GM12878 (cell line): ENCODE measurements at regions of chr14 and their contacts with region 1.

Region 1: DNA sequence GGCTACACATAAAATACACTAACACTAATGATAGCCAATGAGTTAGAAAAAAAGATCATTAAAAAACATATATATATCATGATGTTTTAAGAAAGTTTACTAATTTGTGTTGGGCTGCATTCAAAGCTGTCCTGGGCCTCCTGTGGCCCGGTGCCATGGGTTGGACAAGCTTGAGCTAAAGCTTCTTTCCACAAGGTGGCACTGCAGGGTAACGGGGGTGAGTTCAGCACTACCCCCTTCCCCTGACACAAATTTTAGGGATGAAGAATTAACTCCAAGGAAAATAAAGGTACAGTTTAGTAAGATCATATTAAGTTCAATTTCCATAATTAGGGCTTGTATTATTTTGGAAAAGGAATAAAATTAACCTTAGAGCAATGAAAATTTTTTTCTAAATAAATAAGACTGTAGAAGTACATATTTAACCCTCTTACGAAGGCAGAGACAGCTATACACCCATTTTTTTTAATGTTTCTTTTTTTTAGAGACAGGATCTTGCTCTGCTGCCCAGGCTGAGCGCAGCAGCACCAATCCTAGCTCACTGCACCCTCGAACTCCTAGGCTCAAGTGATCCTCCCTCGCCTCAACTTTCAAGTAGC is 38.9 kb downstream of the PPP1R13B start:
- DNase-seq: no peak
- ATAC-seq: peak; percentile 89
- H3K4me3 ChIP-seq: no peak overlapping the region
- H3K27ac ChIP-seq: no peak overlapping the region
- H3K4me1 ChIP-seq: peaks cover 30% of the 10 kb centered on the region
- H3K27me3 ChIP-seq: no peaks in the 10 kb centered on the region
- CTCF ChIP-seq: peak; percentile 79 to 88 (median 85)
- EP300 ChIP-seq: no peak
- POLR2A ChIP-seq: no peak
- RAD21 ChIP-seq: peak; percentile 91

Region 2: DNA sequence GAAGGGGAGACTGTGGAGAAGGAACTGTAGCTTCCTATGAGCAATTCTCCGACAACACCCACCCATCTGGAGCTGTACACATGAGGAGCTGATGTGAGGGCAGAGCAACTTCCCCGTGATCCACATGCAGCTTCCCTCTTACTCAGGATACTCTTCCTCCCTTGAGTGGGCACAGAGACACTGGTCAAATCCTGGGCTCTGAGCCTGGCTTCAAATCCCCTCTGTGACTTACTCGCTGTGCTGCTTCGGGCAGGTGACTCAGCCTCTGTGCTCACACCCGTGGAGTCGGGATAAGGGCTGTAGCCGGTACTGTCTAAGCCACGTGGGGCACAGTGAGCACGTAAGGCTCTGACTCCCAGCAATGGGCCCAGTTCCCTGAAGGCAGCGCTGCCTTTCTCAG is 61.8 kb before region 1 on chr14:
- CTCF ChIA-PET with region 1: no interaction called
- POLR2A ChIA-PET with region 1: no interaction called
- RAD21 ChIA-PET with region 1: no interaction called
- SMC1A ChIA-PET with region 1: no interaction called
- in situ Hi-C with region 1: no loop called
- intact Hi-C with region 1: no loop called
- DNase-seq: no peak
- ATAC-seq: no peak
- H3K4me3 ChIP-seq: no peak overlapping the region
- H3K27ac ChIP-seq: no peak overlapping the region
- H3K4me1 ChIP-seq: no peaks in the 10 kb centered on the region
- H3K27me3 ChIP-seq: no peaks in the 10 kb centered on the region
- CTCF ChIP-seq: no peak
- EP300 ChIP-seq: no peak
- POLR2A ChIP-seq: no peak
- RAD21 ChIP-seq: no peak

Region 3: DNA sequence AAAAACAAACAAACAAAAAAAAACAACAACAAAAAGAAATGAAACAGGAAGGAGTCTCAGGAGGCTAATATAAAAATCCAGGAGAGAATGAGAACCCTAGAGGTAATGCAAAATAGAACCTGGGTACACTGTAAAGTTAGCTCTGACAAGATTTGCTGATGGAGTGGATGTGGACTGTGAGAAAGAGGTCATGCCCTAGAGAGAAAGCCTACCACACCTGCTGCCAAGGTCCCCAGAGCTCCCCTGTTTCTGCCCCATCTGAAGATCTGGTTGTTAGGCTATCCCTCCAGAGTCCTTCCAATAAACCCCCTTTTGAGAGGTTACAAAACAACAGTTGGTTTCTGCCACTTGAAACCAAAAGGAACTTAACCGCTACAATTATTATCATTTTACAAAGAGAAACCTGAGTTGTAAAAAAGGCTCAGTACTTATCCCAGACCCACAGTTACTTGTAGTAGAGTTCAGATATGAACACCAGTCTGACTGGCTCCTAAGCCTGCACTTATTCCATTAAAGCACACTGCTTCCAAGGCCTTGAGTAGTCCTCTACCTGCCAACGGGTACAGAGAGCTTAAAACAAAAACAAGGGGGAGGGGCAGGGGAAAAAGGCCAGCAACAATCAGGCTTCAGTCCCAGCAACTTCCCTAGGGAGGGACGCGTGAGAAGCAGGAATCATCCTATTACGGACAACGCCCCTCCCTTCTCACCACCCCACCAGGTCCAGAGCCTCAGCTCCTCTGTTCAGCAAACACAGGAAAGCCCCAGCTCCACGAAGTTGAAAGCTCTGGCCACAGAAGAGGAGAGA is 11.2 kb after region 1 on chr14:
- CTCF ChIA-PET with region 1: interaction called, 27 read pairs
- POLR2A ChIA-PET with region 1: no interaction called
- RAD21 ChIA-PET with region 1: interaction called, 11 read pairs
- SMC1A ChIA-PET with region 1: interaction called, 15 read pairs
- in situ Hi-C with region 1: no loop called
- intact Hi-C with region 1: no loop called
- DNase-seq: no peak
- ATAC-seq: peak; percentile 77
- H3K4me3 ChIP-seq: peak overlapping the region; percentile 43
- H3K27ac ChIP-seq: peak overlapping the region; percentile 47
- H3K4me1 ChIP-seq: peaks cover 4% of the 10 kb centered on the region
- H3K27me3 ChIP-seq: no peaks in the 10 kb centered on the region
- CTCF ChIP-seq: no peak
- EP300 ChIP-seq: no peak
- POLR2A ChIP-seq: no peak
- RAD21 ChIP-seq: no peak

Region 4: DNA sequence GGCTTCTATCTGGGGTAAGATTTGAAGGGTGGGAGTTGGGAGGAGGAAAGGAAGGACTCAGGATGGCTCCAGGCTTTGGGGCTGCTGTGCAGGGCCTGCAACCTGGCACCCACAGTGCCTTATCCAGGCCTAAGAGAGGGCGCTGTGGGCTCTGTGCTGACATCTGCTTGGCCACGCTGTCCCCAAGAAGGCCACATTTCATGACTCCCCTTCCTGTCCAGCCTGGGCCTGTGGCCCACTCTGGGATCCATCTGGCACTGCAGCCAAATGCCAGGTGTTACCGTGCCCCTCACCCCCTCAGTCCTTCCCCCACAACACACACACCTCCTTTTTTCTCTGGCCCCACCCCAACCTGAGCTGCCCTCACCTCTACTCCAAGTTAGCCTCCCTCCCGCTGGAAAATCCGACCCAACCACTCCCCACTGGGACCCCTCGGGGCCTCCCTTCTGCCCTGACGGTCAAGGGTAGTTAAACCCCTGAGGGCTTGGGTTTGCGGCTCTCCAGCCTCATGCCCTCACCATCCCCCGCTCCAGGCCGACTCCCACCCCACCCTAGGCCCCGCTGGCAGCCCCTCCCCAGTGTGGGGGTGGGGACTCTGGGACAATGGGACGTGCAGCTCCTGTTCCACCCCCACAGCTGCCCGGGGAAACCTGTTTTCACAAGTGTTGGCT is 46.7 kb after region 1 on chr14:
- CTCF ChIA-PET with region 1: interaction called, 11 read pairs
- POLR2A ChIA-PET with region 1: no interaction called
- RAD21 ChIA-PET with region 1: interaction called, 5 read pairs
- SMC1A ChIA-PET with region 1: interaction called, 5 read pairs
- in situ Hi-C with region 1: no loop called
- intact Hi-C with region 1: no loop called
- DNase-seq: no peak
- ATAC-seq: no peak
- H3K4me3 ChIP-seq: no peak overlapping the region
- H3K27ac ChIP-seq: no peak overlapping the region
- H3K4me1 ChIP-seq: no peaks in the 10 kb centered on the region
- H3K27me3 ChIP-seq: peaks cover 0 to 1% of the 10 kb centered on the region in 2 experiments; a peak in 1 of 4 replicates
- CTCF ChIP-seq: no peak
- EP300 ChIP-seq: no peak
- POLR2A ChIP-seq: no peak
- RAD21 ChIP-seq: no peak

Region 5: DNA sequence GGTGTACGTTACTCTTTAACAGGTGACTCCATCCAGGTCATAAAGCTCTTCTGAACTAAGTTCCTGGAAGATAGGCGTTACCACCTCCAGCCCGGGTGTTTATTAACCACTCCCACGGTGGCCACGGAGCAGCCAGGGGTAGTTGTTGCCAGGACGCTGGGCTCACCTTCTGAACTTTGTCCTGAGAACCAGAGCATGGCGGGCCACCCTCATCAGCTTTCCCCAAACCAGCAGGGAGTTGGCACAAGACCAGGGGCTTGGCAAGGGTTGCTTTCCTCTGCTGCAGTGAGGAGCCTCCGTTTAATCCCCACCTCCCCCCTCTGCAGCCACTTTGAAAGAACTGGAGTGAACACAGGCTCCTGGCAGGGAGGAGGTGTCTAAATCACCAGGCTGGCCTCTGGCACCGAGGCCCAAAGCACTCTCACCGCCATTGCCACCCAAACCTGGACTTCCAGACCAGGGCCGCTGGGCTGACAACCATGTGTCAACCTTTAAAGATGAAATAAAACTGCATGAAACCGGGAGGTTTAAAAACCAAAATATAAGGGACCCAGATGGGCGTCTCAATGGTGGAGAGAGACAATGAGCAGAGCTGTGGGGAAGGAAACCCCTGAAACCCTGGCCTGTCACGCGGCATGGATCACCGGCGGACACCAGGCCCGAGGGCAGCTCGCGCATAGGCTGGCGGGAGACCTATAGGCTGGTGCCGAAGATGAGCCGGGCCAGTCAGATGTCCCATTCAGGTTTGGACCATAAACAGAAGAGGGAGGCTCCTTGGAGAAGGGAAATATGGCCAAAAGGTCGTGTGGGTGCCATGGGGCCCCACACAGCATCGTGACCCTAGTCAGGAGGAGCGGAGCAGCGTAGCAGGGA is 88.8 kb after region 1 on chr14:
- CTCF ChIA-PET with region 1: interaction called, 52 read pairs
- POLR2A ChIA-PET with region 1: no interaction called
- RAD21 ChIA-PET with region 1: interaction called, 6 read pairs
- SMC1A ChIA-PET with region 1: interaction called, 3 read pairs
- in situ Hi-C with region 1: no loop called
- intact Hi-C with region 1: no loop called
- DNase-seq: no peak
- ATAC-seq: no peak
- H3K4me3 ChIP-seq: no peak overlapping the region
- H3K27ac ChIP-seq: no peak overlapping the region
- H3K4me1 ChIP-seq: no peaks in the 10 kb centered on the region
- H3K27me3 ChIP-seq: no peaks in the 10 kb centered on the region
- CTCF ChIP-seq: no peak
- EP300 ChIP-seq: no peak
- POLR2A ChIP-seq: no peak
- RAD21 ChIP-seq: no peak

Region 6: DNA sequence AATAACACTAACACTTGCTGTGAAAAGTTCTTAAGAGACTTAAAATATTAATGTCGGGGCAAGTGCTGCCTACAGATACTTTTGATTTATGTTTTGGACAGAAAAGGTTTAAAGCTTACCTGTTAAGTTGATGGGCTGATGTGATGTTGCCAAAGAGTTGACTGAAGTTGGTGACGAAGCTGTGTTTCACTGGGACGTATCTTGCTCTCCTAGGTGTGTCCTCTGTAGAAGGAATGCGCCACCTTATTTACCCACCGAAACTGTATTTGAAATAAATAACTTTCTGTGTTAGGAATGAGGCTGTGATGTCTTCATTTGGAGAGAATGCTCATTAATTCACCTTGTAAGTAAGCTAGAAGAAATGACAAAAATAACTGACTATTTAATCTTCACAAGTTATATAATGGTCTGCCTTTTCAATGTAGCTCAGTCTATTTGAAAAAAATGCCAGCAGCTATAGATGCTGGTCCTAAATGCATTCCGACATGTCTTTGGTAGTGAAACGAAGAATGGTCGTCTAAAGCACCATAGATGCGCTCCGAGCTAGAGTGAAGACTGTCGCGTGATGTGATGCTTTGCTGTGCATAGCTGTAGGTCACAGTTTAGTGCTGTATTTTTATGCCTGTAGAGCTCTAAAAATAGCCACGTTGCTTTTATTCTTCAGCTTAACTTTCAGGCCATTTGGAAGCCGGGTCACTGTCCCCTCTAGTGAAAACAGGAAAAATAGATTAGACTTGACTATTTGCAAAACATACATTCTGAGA is 133.7 kb after region 1 on chr14 and contains the start of gene RD3L:
- CTCF ChIA-PET with region 1: no interaction called
- POLR2A ChIA-PET with region 1: no interaction called
- RAD21 ChIA-PET with region 1: no interaction called
- SMC1A ChIA-PET with region 1: no interaction called
- in situ Hi-C with region 1: no loop called
- intact Hi-C with region 1: no loop called
- DNase-seq: no peak
- ATAC-seq: no peak
- H3K4me3 ChIP-seq: no peak within 1 kb of the TSS
- H3K27ac ChIP-seq: no peak within 1 kb of the TSS
- H3K4me1 ChIP-seq: no peaks in the 10 kb centered on the region
- H3K27me3 ChIP-seq: peaks cover 0 to 6% of the 10 kb centered on the region in 2 experiments; a peak in 3 of 4 replicates
- CTCF ChIP-seq: no peak
- EP300 ChIP-seq: no peak
- POLR2A ChIP-seq: no peak
- RAD21 ChIP-seq: no peak
- polyA plus RNA-seq, gene RD3L: not detected

Region 7: DNA sequence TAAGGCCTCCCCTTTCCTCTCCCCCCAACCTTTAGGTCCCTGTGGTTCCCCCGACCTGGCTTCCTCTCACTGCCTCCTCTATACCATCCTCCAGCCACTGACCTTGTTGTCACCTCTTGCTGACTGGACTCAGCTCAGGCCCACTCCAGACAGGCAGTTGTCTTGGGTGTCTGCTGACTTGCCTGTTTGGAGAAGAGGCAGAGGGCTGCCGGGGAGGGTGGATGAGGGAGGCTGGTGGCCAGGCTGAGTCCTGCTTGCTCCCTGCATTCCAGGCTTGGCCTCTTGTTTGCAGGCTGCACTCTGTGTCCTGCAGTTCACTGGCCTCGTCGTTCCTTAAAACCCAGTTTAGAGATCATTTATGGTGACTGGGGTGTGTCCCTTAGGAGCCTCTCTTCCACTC is 164.9 kb after region 1 on chr14:
- CTCF ChIA-PET with region 1: interaction called, 96 read pairs
- POLR2A ChIA-PET with region 1: no interaction called
- RAD21 ChIA-PET with region 1: interaction called, 3 read pairs
- SMC1A ChIA-PET with region 1: interaction called, 14 read pairs
- in situ Hi-C with region 1: no loop called
- intact Hi-C with region 1: no loop called
- DNase-seq: no peak
- ATAC-seq: no peak
- H3K4me3 ChIP-seq: no peak overlapping the region
- H3K27ac ChIP-seq: no peak overlapping the region
- H3K4me1 ChIP-seq: no peaks in the 10 kb centered on the region
- H3K27me3 ChIP-seq: no peaks in the 10 kb centered on the region
- CTCF ChIP-seq: no peak
- EP300 ChIP-seq: no peak
- POLR2A ChIP-seq: no peak
- RAD21 ChIP-seq: no peak

Region 8: GRCh38 chr14:104078031-104078455 is 269.5 kb after region 1 on chr14:
- CTCF ChIA-PET with region 1: interaction called, 33 read pairs
- POLR2A ChIA-PET with region 1: no interaction called
- RAD21 ChIA-PET with region 1: interaction called, 6 read pairs
- SMC1A ChIA-PET with region 1: interaction called, 9 read pairs
- in situ Hi-C with region 1: no loop called
- intact Hi-C with region 1: loop called (anchors 2 kb)
- DNase-seq: peak; percentile 43
- ATAC-seq: peak; percentile 100
- H3K4me3 ChIP-seq: no peak overlapping the region
- H3K27ac ChIP-seq: no peak overlapping the region
- H3K4me1 ChIP-seq: no peaks in the 10 kb centered on the region; the same call in 1 of the 2 replicates
- H3K27me3 ChIP-seq: no peaks in the 10 kb centered on the region
- CTCF ChIP-seq: peak; percentile 100; a peak in 5 of 6 replicates
- EP300 ChIP-seq: no peak
- POLR2A ChIP-seq: no peak
- RAD21 ChIP-seq: peak; percentile 83

Region 9: DNA sequence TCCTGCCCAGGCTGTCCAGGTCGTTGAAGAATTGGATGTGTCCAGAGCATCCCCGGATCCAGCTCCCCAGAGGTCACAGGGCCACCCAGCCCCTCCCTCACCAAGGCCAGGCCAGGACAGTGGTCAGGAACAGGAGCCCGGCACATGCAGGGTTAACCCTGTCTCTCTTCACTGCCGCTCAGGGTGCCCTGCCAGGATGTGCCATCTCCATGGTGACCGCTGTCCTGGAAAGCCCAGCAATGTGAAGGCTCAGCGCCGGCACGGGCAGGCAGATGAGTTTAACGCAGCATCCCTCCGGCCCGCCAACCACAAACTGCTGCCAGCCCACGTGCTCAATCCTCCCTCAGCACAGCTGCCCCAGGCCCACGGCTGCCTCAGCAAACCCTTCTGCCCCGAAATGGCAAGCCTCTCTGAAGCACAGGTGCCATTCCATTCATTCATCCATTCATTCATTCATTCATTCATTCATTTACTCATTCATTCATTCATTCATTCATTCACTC is 791.7 kb after region 1 on chr14:
- CTCF ChIA-PET with region 1: no interaction called
- POLR2A ChIA-PET with region 1: no interaction called
- RAD21 ChIA-PET with region 1: no interaction called
- SMC1A ChIA-PET with region 1: no interaction called
- in situ Hi-C with region 1: no loop called
- intact Hi-C with region 1: no loop called
- DNase-seq: no peak
- ATAC-seq: no peak
- H3K4me3 ChIP-seq: no peak overlapping the region
- H3K27ac ChIP-seq: no peak overlapping the region
- H3K4me1 ChIP-seq: no peaks in the 10 kb centered on the region
- H3K27me3 ChIP-seq: no peaks in the 10 kb centered on the region; a peak in 1 of 4 replicates
- CTCF ChIP-seq: no peak
- EP300 ChIP-seq: no peak
- POLR2A ChIP-seq: no peak
- RAD21 ChIP-seq: no peak

Region 10: DNA sequence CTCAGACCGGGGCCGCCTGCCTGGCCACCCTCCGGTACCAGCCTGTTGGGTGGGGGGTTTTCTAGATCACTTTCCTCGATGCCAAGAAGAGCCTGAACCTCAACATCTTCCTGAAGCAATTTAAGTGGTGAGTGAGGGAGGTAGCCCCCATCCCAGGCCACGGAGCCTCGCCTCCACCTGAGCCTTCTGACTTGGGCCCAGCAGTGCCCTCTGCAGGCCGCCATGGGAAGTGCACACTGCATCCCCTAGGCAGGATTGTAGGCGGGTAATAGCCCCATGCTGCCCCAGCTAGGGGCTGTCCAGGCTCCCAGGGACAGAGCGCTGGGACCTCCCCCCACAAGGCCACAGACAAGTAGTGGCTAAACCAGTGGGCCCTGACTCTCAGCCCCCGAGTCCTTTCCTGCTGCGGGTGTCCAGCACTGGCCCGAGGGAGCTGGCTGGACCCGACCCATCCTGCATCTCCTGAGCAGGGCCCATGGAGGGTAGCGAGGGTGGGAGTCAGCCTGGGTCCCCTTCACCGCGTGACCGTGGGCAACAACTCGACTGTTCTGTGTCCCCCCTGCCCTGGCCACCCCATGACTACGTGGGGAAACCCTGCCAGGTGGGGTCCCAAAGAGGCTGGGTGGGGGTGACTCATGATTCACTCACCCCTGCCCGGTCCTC is 900.2 kb after region 1 on chr14:
- CTCF ChIA-PET with region 1: no interaction called
- POLR2A ChIA-PET with region 1: no interaction called
- RAD21 ChIA-PET with region 1: no interaction called
- SMC1A ChIA-PET with region 1: no interaction called
- in situ Hi-C with region 1: no loop called
- intact Hi-C with region 1: no loop called
- DNase-seq: no peak
- ATAC-seq: peak; percentile 94
- H3K4me3 ChIP-seq: no peak overlapping the region
- H3K27ac ChIP-seq: no peak overlapping the region
- H3K4me1 ChIP-seq: no peaks in the 10 kb centered on the region
- H3K27me3 ChIP-seq: no peaks in the 10 kb centered on the region
- CTCF ChIP-seq: peak; percentile 89 to 97 (median 96)
- EP300 ChIP-seq: no peak
- POLR2A ChIP-seq: no peak
- RAD21 ChIP-seq: peak; percentile 87